ENCODE measurements at regions of chr3 and their contacts with region 1.

Region 1: GRCh38 chr3:43180027-43180426 is 74.1 kb upstream of the POMGNT2 start:
- DNase-seq: peak; percentile 96
- H3K4me3 ChIP-seq: no peak overlapping the region
- H3K27ac ChIP-seq: peak overlapping the region; percentile 89
- H3K4me1 ChIP-seq: peaks cover 47% of the 10 kb centered on the region
- H3K27me3 ChIP-seq: no peaks in the 10 kb centered on the region
- CTCF ChIP-seq: no peak
- POLR2A ChIP-seq: no peak

Region 2: GRCh38 chr3:43105596-43106292 is 74.3 kb before region 1 on chr3 and contains the start of gene POMGNT2:
- CTCF ChIA-PET with region 1: no interaction called
- POLR2A ChIA-PET with region 1: no interaction called
- dilution Hi-C with region 1: no loop called
- intact Hi-C with region 1: no loop called
- DNase-seq: peak; percentile 89
- H3K4me3 ChIP-seq: peak within 1 kb of the TSS; percentile 62 to 71 (median 68)
- H3K27ac ChIP-seq: no peak within 1 kb of the TSS
- H3K4me1 ChIP-seq: peaks cover 4% of the 10 kb centered on the region
- H3K27me3 ChIP-seq: no peaks in the 10 kb centered on the region
- CTCF ChIP-seq: no peak
- POLR2A ChIP-seq: no peak
- total RNA-seq, gene POMGNT2: 6.4 and 9.1 TPM in 2 replicates

Region 3: GRCh38 chr3:43190666-43191065 is 10.6 kb after region 1 on chr3:
- CTCF ChIA-PET with region 1: interaction called, 5 read pairs
- POLR2A ChIA-PET with region 1: no interaction called
- dilution Hi-C with region 1: no loop called
- intact Hi-C with region 1: loop called (anchors 1 kb)
- DNase-seq: peak; percentile 52
- H3K4me3 ChIP-seq: no peak overlapping the region
- H3K27ac ChIP-seq: peak overlapping the region; percentile 90
- H3K4me1 ChIP-seq: peaks cover 67% of the 10 kb centered on the region
- H3K27me3 ChIP-seq: no peaks in the 10 kb centered on the region
- CTCF ChIP-seq: no peak
- POLR2A ChIP-seq: no peak

Region 4: DNA sequence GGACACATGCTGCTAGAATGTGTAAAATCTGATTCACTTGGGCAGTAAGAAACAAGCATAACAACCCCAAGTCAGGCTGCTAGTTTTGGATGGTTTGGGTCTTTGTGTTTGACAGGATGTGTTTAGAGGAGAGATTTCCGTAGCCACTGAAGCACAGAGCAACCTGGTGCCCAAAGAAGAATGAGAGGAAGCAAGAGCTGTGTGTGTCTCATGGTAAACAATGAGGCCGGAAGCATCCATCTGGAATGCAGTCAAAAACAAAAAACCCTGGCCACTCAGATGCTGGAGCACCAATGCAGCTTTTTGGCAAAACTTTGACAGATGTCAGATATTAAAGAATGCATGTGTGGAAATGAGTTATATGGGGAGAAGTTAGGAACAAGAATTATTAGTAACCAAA is 66.9 kb after region 1 on chr3:
- CTCF ChIA-PET with region 1: interaction called, 5 read pairs
- POLR2A ChIA-PET with region 1: no interaction called
- dilution Hi-C with region 1: no loop called
- intact Hi-C with region 1: loop called (anchors 1 kb)
- DNase-seq: peak; percentile 97
- H3K4me3 ChIP-seq: no peak overlapping the region
- H3K27ac ChIP-seq: peak overlapping the region; percentile 99
- H3K4me1 ChIP-seq: peaks cover 47% of the 10 kb centered on the region
- H3K27me3 ChIP-seq: no peaks in the 10 kb centered on the region
- CTCF ChIP-seq: no peak
- POLR2A ChIP-seq: peak; percentile 55

Region 5: DNA sequence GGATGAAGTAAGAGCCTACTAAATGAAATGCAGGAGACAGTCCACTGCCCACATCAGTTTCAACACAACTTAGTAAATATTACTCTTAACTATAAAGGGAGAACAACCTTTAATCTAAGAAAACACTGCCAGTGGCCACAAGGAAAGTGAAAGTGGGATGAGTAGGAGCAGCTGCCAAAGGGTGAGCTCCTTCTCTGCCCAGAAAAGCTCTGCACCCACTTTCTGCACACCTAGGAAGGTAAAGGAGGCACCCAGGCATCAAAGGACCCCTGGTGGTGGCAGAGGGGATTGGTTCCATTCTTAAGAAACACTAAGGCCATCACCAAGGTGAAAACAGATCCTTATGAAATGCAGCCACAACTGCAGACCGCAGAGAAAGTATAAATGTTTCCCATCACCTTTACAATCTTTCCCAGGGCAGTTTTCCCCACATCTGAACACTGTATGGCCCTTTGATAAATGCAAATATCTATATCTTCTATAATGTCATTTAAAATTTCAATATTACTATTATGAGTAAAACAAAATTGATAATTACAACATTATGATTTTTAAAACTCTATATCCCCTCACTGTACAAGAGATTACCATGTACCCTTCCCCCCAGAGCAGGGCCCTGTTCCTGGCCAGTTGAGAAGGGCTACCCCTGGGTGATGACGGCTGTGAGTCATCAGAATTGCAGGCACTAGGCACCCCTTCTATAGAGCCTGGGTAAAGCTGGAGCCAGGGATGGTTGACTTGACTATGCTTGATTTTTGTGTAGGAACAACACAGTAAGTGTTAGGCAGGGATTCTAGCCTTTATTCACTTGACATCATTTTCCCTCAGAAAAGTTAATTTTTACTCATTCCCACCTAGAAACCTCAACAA is 198.3 kb after region 1 on chr3:
- CTCF ChIA-PET with region 1: no interaction called
- POLR2A ChIA-PET with region 1: no interaction called
- dilution Hi-C with region 1: loop called (anchors 25 kb)
- intact Hi-C with region 1: no loop called
- DNase-seq: no peak
- H3K4me3 ChIP-seq: no peak overlapping the region
- H3K27ac ChIP-seq: no peak overlapping the region
- H3K4me1 ChIP-seq: peaks cover 11% of the 10 kb centered on the region
- H3K27me3 ChIP-seq: no peaks in the 10 kb centered on the region
- CTCF ChIP-seq: peak; percentile 49 to 53
- POLR2A ChIP-seq: no peak

Region 6: DNA sequence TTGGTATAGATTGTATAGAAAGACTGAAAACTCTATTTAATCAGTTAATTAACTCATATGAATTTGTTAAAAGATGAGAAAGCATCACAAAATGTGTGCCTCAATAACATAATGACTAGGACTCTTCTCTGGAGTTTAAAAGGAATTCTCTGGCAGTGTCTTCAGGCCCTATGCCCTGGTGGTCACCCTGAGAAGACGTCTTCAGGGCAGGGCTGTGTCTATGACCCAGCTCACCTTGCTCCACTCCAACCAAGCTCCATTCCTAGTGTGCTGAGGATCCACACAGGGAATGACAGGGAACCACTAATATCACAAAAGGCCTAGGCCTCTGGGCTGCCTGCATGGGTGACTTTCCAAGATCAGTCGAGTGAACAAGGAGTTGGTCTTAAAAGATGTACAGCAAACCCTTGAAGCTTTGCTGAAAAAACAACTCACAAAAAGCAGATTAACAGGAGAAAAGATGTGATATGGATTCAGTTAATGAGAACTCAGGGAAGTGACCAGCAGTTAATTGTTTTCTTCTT is 262.9 kb after region 1 on chr3:
- CTCF ChIA-PET with region 1: no interaction called
- POLR2A ChIA-PET with region 1: no interaction called
- dilution Hi-C with region 1: no loop called
- intact Hi-C with region 1: no loop called
- DNase-seq: no peak
- H3K4me3 ChIP-seq: no peak overlapping the region
- H3K27ac ChIP-seq: no peak overlapping the region
- H3K4me1 ChIP-seq: no peaks in the 10 kb centered on the region
- H3K27me3 ChIP-seq: no peaks in the 10 kb centered on the region
- CTCF ChIP-seq: no peak
- POLR2A ChIP-seq: no peak

Region 7: DNA sequence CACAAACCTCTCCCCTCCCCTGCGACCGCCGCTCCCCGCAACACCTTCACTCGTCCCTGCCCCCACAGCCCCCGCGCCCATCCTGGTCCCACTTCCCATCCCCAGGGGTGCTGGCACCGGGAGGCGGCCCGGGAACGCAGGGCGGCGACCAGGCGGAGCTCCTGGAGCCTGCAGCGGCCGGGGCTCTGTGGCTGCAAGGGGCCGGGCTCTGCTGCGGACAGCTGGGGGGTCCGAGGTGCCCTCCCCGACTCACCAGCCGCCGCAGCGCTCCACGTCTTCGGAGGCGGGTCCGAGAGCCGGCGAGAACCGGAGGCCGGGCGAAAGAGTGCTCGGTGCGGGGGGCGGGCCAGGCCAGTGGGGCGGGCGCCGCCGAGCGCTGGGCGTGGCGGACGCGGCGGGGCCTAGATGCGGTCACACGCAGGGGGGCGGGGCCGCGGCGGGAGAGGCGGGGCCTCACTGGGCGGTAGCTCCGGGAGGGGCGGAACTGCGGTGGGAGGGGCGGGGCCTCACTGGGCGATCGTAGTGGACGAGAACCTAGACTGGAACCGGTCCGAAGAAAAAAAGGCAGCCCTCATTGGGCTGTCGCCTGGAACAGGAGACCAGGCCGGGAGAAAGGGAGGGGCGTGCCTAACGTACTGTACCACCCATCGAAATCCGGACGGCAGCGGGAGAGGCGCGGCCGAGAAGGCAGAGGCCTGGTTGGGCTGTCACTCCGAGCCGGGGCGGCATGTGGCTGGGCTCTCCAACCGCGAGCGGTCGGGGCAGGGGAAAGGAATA is 441.8 kb after region 1 on chr3 and contains the start of gene ANO10:
- CTCF ChIA-PET with region 1: no interaction called
- POLR2A ChIA-PET with region 1: no interaction called
- dilution Hi-C with region 1: no loop called
- intact Hi-C with region 1: loop called (anchors 10 kb)
- DNase-seq: peak; percentile 99
- H3K4me3 ChIP-seq: peak within 1 kb of the TSS; percentile 75 to 83 (median 81)
- H3K27ac ChIP-seq: peak within 1 kb of the TSS; percentile 63
- H3K4me1 ChIP-seq: peaks cover 10% of the 10 kb centered on the region
- H3K27me3 ChIP-seq: no peaks in the 10 kb centered on the region
- CTCF ChIP-seq: no peak
- POLR2A ChIP-seq: peak; percentile 69
- total RNA-seq, gene ANO10: 40.9 and 45.8 TPM in 2 replicates

Region 8: GRCh38 chr3:43753781-43754201 is 573.8 kb after region 1 on chr3:
- CTCF ChIA-PET with region 1: no interaction called
- POLR2A ChIA-PET with region 1: no interaction called
- dilution Hi-C with region 1: no loop called
- intact Hi-C with region 1: no loop called
- DNase-seq: peak; percentile 62
- H3K4me3 ChIP-seq: no peak overlapping the region
- H3K27ac ChIP-seq: peak overlapping the region; percentile 68
- H3K4me1 ChIP-seq: peaks cover 19% of the 10 kb centered on the region
- H3K27me3 ChIP-seq: no peaks in the 10 kb centered on the region
- CTCF ChIP-seq: no peak
- POLR2A ChIP-seq: no peak

Measured in endothelial cell of umbilical vein (primary cell).